Aorta (tissue), 5 donors: ENCODE measurements at regions of chr7 and their contacts with region 1.

Region 1: DNA sequence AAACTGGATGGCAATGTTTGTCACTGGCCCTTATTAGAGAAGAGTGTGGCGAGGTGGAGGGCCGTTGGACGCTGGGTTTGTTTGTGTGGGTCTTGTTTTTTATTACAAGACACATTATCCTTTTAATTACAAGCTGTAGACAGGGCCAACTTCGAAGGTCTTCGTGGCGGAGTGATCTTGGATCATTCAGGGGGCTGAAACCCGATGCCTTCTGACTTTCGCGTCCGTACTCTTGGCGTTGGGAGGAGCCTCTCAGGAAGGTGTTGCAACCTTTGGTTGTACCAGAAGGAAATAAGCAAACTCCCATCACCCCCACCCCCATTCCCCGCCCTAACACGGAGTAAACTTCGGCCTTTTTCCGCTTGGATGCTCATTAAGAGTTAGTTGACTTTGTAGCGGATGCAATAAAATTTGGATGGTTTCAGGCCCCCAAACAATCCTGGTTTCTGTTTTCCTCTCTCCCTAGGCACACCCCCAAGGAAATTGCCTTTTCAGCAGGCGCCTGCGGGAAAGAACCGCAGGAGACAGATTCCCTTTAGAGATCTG is 294.5 kb upstream of the NFE2L3 start:
- DNase-seq: no peak
- ATAC-seq: no peak
- H3K4me3 ChIP-seq: peak overlapping the region in 1 of 2 donors; percentile 28
- H3K27ac ChIP-seq: no peak overlapping the region
- H3K4me1 ChIP-seq: no peaks in the 10 kb centered on the region
- H3K27me3 ChIP-seq: peaks cover 0 to 4% of the 10 kb centered on the region in 2 donors

Region 2: DNA sequence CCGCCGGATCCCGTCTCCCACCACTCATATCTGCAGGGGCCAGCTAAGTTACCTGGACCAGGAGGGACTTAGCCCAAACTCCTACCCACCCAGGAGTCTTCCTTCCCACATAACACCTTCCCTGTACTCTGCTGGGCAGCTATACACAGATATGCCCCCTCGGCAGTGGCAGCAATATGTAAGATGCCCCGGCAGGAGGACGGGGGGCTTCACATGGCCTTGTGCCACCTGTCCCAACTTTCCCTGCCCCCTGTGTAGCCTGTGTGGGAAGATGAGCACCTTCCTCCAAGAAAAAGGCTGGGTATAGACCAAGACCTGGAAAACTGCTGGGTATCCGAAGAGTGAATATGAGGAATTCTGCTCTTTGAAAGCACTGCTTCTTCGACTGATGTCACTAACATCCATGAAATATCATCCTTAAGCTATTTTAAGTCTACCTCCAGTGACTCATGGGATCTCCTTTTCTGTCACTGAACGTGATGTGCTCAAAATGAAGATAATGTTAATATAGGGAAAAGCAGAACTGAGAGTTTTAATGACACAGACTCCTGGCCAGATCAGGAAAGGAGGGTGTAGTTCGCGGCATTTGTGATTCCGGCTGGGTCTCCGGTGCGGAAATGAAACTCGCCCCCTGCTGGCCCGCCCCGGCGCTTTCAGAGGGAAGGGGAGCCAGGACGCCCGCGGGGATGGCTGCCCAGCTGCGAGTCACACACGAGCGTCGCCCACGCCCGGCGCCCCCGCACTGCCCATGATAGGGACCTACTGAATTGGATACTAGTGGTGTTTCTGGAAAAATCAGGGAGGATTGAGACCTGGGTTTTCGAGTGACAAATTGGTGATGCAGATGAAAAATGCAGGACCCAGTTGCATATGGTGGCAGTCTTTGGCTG is 37.7 kb after region 1 on chr7:
- intact Hi-C with region 1: no loop called
- DNase-seq: peak; percentile 76 to 93
- ATAC-seq: peak; percentile 73
- H3K4me3 ChIP-seq: no peak overlapping the region
- H3K27ac ChIP-seq: no peak overlapping the region
- H3K4me1 ChIP-seq: no peaks in the 10 kb centered on the region
- H3K27me3 ChIP-seq: peaks cover 0 to 3% of the 10 kb centered on the region in 2 donors

Region 3: DNA sequence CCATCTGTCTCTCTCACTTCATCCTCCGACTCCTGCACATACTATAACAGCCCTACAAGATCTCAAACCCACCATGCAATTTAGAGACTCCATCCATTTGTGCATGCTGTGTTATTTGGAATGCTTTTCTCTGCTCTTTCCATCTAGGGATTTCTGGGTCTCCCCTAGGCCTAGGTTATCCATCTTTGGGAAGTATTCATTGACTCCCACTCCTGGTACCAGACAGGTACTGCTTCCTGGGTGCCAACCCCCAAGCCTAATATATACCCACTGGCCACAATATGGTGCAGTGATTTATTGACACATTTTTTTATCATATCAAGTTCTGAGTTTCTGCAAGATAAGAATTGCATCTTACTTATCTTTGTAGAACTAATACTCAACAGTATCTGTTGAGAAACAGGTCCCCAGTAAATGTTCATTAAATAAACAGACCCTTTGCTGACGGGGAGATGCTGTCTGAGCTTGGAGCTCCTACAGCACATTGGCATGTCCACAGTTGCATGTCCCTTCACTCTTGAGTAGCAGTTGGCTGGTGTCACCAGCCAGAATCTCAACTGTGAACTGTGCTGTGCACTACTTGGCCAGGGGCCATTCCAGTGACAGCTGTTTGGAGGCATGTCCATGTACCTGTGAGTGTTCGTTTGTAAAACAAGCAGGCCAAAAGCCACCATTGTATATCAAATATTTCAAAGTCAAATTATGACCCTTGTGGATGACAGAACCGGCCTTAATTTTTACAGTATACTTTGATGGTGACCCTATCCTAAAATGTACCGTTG is 71.3 kb after region 1 on chr7:
- intact Hi-C with region 1: no loop called
- DNase-seq: no peak
- ATAC-seq: no peak
- H3K4me3 ChIP-seq: no peak overlapping the region
- H3K27ac ChIP-seq: no peak overlapping the region
- H3K4me1 ChIP-seq: no peaks in the 10 kb centered on the region
- H3K27me3 ChIP-seq: peaks cover 0 to 2% of the 10 kb centered on the region in 2 donors

Region 4: GRCh38 chr7:27113991-27114769 is 1256.7 kb after region 1 on chr7:
- intact Hi-C with region 1: loop called in 1 of 2 experiments (anchors 2 kb)
- DNase-seq: peak; percentile 81 to 88
- ATAC-seq: peak; percentile 12
- H3K4me3 ChIP-seq: peak overlapping the region; percentile 84 to 94
- H3K27ac ChIP-seq: peak overlapping the region; percentile 92 to 95
- H3K4me1 ChIP-seq: peaks cover 0 to 6% of the 10 kb centered on the region in 2 donors
- H3K27me3 ChIP-seq: no peaks in the 10 kb centered on the region

Region 5: DNA sequence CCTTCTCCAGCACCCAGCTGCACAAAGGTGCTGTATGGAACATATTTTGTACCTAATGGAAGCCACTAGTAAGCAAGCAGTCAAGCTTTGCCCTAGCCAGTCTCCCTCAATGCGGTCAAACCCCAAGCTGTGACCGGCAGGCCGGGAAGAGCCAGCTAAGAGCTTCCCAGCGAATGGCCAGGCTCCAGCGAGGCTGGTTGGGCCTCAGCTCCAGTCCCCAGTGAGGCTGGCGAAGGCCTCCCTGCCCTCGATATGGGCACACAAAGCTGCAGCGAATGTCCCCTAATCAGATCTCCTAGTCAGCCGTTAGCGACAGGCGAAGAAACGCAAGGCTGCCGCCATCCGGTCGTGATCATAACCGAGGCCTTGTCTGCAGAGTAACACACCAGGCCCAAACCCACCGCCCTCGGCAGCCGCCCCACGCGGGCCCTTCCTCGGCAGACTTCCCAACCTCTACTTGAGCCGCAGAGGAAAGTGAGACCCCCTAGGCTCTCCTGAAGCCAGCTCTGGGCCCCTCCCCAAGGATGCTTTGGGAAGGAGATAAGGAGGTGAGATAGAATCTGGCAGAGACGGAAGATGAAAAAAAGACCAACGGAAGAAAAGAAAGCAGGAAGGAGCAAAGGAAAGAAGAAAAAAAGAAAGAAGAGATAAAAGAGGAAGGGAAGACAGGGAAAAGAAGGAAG is 1311.0 kb after region 1 on chr7:
- intact Hi-C with region 1: loop called in 1 of 2 experiments (anchors 2 kb)
- DNase-seq: peak; percentile 45 to 90
- ATAC-seq: peak; percentile 13
- H3K4me3 ChIP-seq: no peak overlapping the region
- H3K27ac ChIP-seq: no peak overlapping the region
- H3K4me1 ChIP-seq: no peaks in the 10 kb centered on the region
- H3K27me3 ChIP-seq: peaks cover 0 to 1% of the 10 kb centered on the region in 2 donors